ENCODE measurements at regions of chr7 and their contacts with region 1.

Region 1: DNA sequence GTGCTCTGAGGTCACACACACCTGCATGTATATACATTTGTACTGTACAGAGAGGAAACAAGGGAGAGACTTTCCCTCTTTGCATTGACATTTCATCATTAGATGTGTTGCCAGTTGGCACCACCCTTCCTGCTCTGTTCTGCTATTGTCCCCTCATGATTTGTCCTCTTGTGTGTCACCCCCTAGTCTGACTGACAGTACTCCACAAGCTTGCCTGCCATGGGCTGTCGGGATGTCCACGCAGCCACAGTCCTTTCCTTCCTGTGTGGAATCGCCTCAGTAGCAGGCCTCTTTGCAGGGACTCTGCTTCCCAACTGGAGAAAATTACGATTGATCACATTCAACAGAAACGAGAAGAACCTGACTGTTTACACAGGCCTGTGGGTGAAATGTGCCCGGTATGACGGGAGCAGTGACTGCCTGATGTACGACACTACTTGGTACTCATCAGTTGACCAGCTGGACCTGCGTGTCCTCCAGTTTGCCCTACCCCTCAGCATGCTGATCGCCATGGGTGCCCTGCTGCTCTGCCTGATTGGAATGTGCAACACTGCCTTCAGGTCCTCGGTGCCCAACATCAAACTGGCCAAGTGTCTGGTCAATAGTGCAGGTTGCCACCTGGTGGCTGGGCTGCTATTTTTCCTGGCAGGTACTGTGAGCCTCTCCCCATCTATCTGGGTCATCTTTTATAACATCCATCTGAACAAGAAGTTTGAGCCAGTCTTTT is 9.4 kb downstream of the CLDN12 start:
- DNase-seq: peak in 1 of 2 experiments; percentile 57
- H3K4me3 ChIP-seq: no peak overlapping the region
- H3K27ac ChIP-seq: no peak overlapping the region; the same call in none of the 2 replicates
- H3K4me1 ChIP-seq: no peaks in the 10 kb centered on the region
- H3K27me3 ChIP-seq: no peaks in the 10 kb centered on the region
- CTCF ChIP-seq: peak; percentile 57 to 79 (median 70)
- EP300 ChIP-seq: no peak
- POLR2A ChIP-seq: no peak
- RAD21 ChIP-seq: peak; percentile 60 to 68

Region 2: GRCh38 chr7:90424720-90425119 is 12.1 kb after region 1 on chr7:
- CTCF ChIA-PET with region 1: interaction called, 17 read pairs
- POLR2A ChIA-PET with region 1: no interaction called
- DNase-seq: no peak
- H3K4me3 ChIP-seq: no peak overlapping the region
- H3K27ac ChIP-seq: no peak overlapping the region
- H3K4me1 ChIP-seq: no peaks in the 10 kb centered on the region
- H3K27me3 ChIP-seq: no peaks in the 10 kb centered on the region
- CTCF ChIP-seq: no peak
- EP300 ChIP-seq: no peak
- POLR2A ChIP-seq: no peak
- RAD21 ChIP-seq: no peak

Measured in H1 (cell line).